Activated T-helper 2 cell treated with anti-CD3 and anti-CD28 coated beads, Interferon-gamma antibody, Interleukin-2, Interleukin-4, amounts not matched to agents 10 μg/mL and 5 μg/mL and 100 μg/mL, durations not matched to agents 14 hours and 24 hours and 36 hours (primary cell): ENCODE measurements at regions of chr7 and their contacts with region 1.

Region 1: DNA sequence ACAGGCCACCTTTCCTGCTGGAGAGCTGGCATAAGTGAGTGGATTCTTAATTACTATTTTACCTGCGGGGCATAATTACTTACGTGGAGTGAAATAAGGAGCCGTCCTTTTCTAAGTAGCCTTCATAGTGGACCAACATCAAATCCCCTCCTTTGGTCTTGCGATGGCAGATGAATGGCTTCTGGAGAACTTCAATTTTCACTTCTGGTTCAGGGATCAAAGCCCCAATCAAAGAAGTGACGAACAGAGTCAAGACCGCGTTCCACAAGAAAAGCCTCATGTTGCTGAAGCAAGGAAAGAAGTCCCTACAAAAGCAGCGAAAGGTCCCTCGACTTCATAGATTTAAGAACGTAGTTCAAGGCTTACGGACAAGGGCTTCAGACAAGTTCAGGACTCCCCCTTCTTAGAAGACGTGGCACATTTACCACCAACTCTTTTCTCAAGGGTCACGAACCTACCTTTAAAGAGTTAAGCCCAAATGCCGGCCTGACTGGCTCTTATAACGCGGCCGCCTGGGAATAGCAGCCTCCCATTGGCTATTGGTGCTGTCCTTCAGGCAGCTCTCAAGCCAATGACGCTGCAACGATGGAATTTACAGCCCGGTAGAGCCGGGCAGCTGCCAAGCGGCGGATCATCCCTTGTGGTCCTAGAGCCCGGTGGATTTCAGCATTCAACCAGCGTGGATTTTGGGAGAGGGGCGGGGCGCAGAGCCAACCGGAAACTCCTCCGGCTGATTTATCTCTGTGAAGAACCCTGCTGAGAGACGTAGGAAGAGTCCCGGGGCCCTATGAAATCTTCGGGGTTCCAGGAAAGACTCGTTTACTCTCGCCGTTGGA is at the start of gene FKBP14:
- DNase-seq: peak; percentile 90
- H3K4me3 Mint-ChIP-seq: peak within 1 kb of the TSS; percentile 93
- H3K27ac Mint-ChIP-seq: peak within 1 kb of the TSS; percentile 84
- H3K4me1 Mint-ChIP-seq: peaks cover 35% of the 10 kb centered on the region
- H3K27me3 Mint-ChIP-seq: no peaks in the 10 kb centered on the region
- total RNA-seq, gene FKBP14: 8.0 and 10.0 TPM in 2 replicates

Region 2: DNA sequence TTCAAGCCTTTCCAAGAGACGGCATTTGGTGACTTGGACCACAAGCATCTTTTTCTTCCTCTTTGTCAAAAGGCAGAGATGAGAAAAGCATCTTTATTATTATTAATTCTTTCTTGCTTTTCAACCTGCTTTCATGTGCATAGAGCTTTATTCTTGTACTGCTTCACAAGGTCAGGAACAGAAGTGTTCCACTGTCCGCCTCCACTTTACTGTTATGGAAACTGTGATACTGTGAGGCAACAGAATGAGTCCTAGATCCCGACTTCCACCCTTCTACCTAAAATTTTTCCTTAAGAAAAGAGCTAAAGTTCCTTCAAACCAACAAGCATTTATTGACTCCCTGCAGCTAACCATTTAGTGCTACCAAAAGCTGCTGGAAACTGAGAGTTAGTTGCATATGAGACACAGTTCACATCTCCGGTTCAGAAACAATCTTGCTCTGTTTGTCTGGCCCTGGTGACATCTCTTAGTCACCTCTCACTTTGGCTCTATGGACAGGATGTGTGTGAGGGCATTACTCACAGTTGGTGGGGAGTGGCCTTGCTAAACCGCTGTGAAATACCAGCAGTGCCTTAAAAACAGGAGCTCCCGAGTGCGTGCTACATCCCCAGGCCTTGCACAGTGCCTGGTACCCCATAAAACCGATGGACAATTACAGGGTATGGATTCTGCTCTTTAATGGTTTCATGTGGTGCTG is 991.3 kb before region 1 on chr7:
- intact Hi-C with region 1: no loop called
- DNase-seq: no peak
- H3K4me3 Mint-ChIP-seq: no peak overlapping the region
- H3K27ac Mint-ChIP-seq: peak overlapping the region; percentile 42
- H3K4me1 Mint-ChIP-seq: peaks cover 8% of the 10 kb centered on the region
- H3K27me3 Mint-ChIP-seq: no peaks in the 10 kb centered on the region

Region 3: GRCh38 chr7:29988424-29989256 is 37.8 kb before region 1 on chr7:
- intact Hi-C with region 1: loop called (anchors 5 kb)
- DNase-seq: no peak
- H3K4me3 Mint-ChIP-seq: peak overlapping the region; percentile 49
- H3K27ac Mint-ChIP-seq: no peak overlapping the region
- H3K4me1 Mint-ChIP-seq: peaks cover 6% of the 10 kb centered on the region
- H3K27me3 Mint-ChIP-seq: peaks cover 59% of the 10 kb centered on the region

Region 4: GRCh38 chr7:30116771-30117170 is 90.3 kb after region 1 on chr7:
- intact Hi-C with region 1: no loop called
- DNase-seq: no peak
- H3K4me3 Mint-ChIP-seq: no peak overlapping the region
- H3K27ac Mint-ChIP-seq: no peak overlapping the region
- H3K4me1 Mint-ChIP-seq: peaks cover 4% of the 10 kb centered on the region
- H3K27me3 Mint-ChIP-seq: no peaks in the 10 kb centered on the region

Region 5: GRCh38 chr7:30134611-30135545 is 108.4 kb after region 1 on chr7 and contains the start of gene MTURN:
- intact Hi-C with region 1: loop called (anchors 2 kb)
- DNase-seq: peak; percentile 81
- H3K4me3 Mint-ChIP-seq: peak within 1 kb of the TSS; percentile 86
- H3K27ac Mint-ChIP-seq: peak within 1 kb of the TSS; percentile 80
- H3K4me1 Mint-ChIP-seq: peaks cover 4% of the 10 kb centered on the region
- H3K27me3 Mint-ChIP-seq: peaks cover 34% of the 10 kb centered on the region
- total RNA-seq, gene MTURN: 4.0 and 4.7 TPM in 2 replicates

Region 6: GRCh38 chr7:30284298-30285066 is 258.0 kb after region 1 on chr7 and contains the start of gene ZNRF2:
- intact Hi-C with region 1: loop called (anchors 1 kb)
- DNase-seq: peak; percentile 99
- H3K4me3 Mint-ChIP-seq: peak within 1 kb of the TSS; percentile 76
- H3K27ac Mint-ChIP-seq: peak within 1 kb of the TSS; percentile 78
- H3K4me1 Mint-ChIP-seq: peaks cover 43% of the 10 kb centered on the region
- H3K27me3 Mint-ChIP-seq: no peaks in the 10 kb centered on the region
- total RNA-seq, gene ZNRF2: 10.2 and 10.4 TPM in 2 replicates

Region 7: GRCh38 chr7:30478349-30479201 is 452.1 kb after region 1 on chr7 and contains the start of gene NOD1:
- intact Hi-C with region 1: loop called (anchors 1 kb)
- DNase-seq: peak; percentile 70
- H3K4me3 Mint-ChIP-seq: peak within 1 kb of the TSS; percentile 91
- H3K27ac Mint-ChIP-seq: peak within 1 kb of the TSS; percentile 89
- H3K4me1 Mint-ChIP-seq: peaks cover 51% of the 10 kb centered on the region
- H3K27me3 Mint-ChIP-seq: no peaks in the 10 kb centered on the region
- total RNA-seq, gene NOD1: 14.8 and 15.8 TPM in 2 replicates

Region 8: DNA sequence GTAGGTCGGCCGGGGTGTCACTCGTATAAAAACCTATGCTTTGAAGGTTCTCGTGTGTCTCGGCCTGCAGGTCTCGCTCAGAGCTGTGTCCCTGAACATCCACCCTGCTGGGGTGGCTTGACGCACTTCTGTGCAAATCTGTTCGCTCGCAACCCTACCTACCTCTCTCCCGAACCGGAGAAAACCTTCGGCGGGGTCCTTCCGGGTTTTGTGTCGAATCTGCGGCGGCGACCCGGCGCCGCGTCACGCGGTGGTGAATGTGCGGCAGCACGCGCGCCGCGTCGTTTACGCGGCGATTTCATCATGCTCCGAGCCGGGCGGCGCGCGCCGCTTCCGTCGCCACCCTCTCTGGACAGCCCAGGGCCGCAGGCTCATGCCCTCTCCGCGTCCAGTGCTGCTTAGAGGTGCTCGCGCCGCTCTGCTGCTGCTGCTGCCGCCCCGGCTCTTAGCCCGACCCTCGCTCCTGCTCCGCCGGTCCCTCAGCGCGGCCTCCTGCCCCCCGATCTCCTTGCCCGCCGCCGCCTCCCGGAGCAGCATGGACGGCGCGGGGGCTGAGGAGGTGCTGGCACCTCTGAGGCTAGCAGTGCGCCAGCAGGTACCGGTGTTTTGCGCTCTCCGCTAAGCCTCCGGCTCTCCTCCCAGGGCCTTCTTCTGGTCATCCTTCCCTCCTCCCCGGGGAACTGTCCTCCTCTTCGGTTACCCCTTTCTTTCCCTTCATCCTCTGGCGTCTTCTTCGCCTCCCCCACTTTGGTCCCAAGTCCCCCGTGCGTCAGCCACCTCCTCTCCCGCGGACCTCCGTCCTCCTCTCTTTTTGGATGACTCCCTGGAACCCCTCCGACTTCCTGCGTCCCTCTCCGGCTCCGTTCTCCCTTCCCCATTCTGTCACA is 568.3 kb after region 1 on chr7 and contains the start of gene GARS1:
- intact Hi-C with region 1: loop called (anchors 2 kb)
- DNase-seq: peak; percentile 85
- H3K4me3 Mint-ChIP-seq: peak within 1 kb of the TSS; percentile 98
- H3K27ac Mint-ChIP-seq: peak within 1 kb of the TSS; percentile 98
- H3K4me1 Mint-ChIP-seq: peaks cover 44% of the 10 kb centered on the region
- H3K27me3 Mint-ChIP-seq: no peaks in the 10 kb centered on the region
- total RNA-seq, gene GARS1: 208 and 221 TPM in 2 replicates